ENCODE measurements at regions of chr18 and their contacts with region 1.

Region 1: DNA sequence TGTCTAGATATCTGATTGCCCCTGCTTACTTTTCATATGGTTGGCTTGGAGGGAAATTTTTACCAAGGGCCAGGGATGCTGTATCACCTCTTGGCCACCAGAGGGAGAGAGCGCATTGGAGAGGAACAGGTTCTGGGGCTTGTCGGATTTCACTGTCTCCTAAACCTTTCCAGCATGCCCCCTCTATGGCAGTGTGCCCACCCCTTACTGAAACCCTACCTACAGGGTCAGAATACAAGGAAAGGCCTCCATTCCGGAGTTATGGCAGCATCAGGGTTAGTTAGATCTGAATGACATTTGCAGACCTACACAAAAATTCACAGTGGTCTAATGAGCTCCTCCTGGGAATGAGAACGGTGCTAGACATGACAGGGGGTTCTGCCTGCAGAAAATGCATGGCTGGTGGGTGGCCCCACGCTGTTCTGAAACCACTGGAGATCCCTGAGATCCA is 5.8 kb downstream of the SLC14A2 start:
- DNase-seq: peak; percentile 45 to 69 (median 61)
- ATAC-seq: peak; percentile 79
- H3K4me3 ChIP-seq: no peak overlapping the region
- H3K27ac ChIP-seq: no peak overlapping the region
- H3K4me1 ChIP-seq: no peaks in the 10 kb centered on the region; a peak in 1 of 5 replicates
- H3K27me3 ChIP-seq: peaks cover 0 to 21% of the 10 kb centered on the region in 2 experiments; a peak in 2 of 5 replicates
- CTCF ChIP-seq: peak; percentile 70 to 81 (median 76)
- EP300 ChIP-seq: no peak
- POLR2A ChIP-seq: no peak
- RAD21 ChIP-seq: peak; percentile 44 to 68; a peak in 3 of 4 replicates

Region 2: DNA sequence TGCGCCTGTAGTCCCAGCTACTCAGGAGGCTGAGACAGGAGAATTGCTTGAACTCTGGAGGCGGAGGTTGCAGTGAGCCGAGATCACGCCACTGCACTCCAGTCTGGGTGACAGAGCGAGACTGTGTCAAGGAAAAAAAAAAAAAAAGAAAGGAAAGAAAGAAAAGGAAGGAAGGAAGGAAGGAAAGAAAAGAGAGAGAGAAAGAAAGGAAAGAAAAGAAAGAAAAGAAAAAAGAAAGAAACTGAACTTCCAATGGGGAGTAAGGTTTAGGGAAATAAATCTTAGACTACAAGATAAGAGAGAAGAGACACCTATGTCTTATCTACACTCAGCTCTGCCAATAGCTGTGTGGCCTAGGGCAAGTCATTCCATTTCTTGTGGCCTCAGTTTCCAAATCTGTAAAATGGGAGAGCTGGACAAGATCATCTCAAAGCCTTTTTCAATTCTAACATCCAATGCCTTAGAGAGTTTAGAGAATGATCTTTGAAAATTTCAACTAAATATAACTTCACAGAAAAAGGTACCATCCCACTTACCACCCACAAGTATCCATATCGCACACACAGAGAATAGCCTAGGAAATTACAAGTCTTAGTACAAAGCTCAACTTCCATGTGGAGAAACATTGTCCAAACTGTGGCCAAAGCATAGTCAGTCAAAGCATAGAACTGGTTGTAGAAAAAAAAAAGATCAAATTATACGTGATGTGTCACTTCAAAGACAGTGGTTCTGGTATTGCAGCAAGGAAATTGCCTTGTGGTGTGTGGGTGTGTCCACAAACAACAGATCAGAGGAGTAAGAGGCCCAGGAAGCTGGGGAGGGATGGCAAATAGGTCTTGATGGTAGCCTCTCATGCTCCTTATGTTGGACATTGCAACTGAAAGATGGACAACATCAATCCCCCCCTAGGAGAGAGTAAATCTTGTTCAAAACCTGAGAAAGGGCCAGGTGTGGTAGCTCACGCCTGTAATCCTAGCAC is 36.6 kb after region 1 on chr18:
- CTCF ChIA-PET with region 1: interaction called, 8 read pairs
- POLR2A ChIA-PET with region 1: no interaction called
- in situ Hi-C with region 1: no loop called
- intact Hi-C with region 1: loop called (anchors 5 kb)
- DNase-seq: no peak
- ATAC-seq: no peak
- H3K4me3 ChIP-seq: no peak overlapping the region
- H3K27ac ChIP-seq: no peak overlapping the region
- H3K4me1 ChIP-seq: no peaks in the 10 kb centered on the region; a peak in 2 of 5 replicates
- H3K27me3 ChIP-seq: peaks cover 0 to 4% of the 10 kb centered on the region in 2 experiments; a peak in 1 of 5 replicates
- CTCF ChIP-seq: no peak
- EP300 ChIP-seq: no peak
- POLR2A ChIP-seq: no peak
- RAD21 ChIP-seq: no peak

Region 3: GRCh38 chr18:45879681-45880655 is 258.9 kb after region 1 on chr18:
- CTCF ChIA-PET with region 1: no interaction called
- POLR2A ChIA-PET with region 1: no interaction called
- in situ Hi-C with region 1: no loop called
- intact Hi-C with region 1: loop called (anchors 1 kb)
- DNase-seq: peak; percentile 63 to 70 (median 66)
- ATAC-seq: peak; percentile 99
- H3K4me3 ChIP-seq: no peak overlapping the region
- H3K27ac ChIP-seq: no peak overlapping the region
- H3K4me1 ChIP-seq: peaks cover 0 to 2% of the 10 kb centered on the region in 2 experiments; a peak in 1 of 5 replicates
- H3K27me3 ChIP-seq: no peaks in the 10 kb centered on the region
- CTCF ChIP-seq: peak; percentile 83 to 91 (median 84)
- EP300 ChIP-seq: no peak
- POLR2A ChIP-seq: no peak
- RAD21 ChIP-seq: peak; percentile 77 to 78

Region 4: GRCh38 chr18:45974088-45974536 is 353.0 kb after region 1 on chr18:
- CTCF ChIA-PET with region 1: no interaction called
- POLR2A ChIA-PET with region 1: no interaction called
- in situ Hi-C with region 1: no loop called
- intact Hi-C with region 1: loop called (anchors 1 kb)
- DNase-seq: peak; percentile 13 to 73 (median 29)
- ATAC-seq: peak; percentile 91
- H3K4me3 ChIP-seq: no peak overlapping the region
- H3K27ac ChIP-seq: no peak overlapping the region
- H3K4me1 ChIP-seq: peaks cover 0 to 5% of the 10 kb centered on the region in 2 experiments; a peak in 1 of 5 replicates
- H3K27me3 ChIP-seq: no peaks in the 10 kb centered on the region
- CTCF ChIP-seq: peak; percentile 54 to 89 (median 68); a peak in 5 of 6 replicates
- EP300 ChIP-seq: no peak; the same call in 1 of the 2 replicates
- POLR2A ChIP-seq: no peak
- RAD21 ChIP-seq: peak; percentile 77 to 88

Measured in K562 (cell line).